ENCODE measurements at regions of chr14 and their contacts with region 1.

Region 1: DNA sequence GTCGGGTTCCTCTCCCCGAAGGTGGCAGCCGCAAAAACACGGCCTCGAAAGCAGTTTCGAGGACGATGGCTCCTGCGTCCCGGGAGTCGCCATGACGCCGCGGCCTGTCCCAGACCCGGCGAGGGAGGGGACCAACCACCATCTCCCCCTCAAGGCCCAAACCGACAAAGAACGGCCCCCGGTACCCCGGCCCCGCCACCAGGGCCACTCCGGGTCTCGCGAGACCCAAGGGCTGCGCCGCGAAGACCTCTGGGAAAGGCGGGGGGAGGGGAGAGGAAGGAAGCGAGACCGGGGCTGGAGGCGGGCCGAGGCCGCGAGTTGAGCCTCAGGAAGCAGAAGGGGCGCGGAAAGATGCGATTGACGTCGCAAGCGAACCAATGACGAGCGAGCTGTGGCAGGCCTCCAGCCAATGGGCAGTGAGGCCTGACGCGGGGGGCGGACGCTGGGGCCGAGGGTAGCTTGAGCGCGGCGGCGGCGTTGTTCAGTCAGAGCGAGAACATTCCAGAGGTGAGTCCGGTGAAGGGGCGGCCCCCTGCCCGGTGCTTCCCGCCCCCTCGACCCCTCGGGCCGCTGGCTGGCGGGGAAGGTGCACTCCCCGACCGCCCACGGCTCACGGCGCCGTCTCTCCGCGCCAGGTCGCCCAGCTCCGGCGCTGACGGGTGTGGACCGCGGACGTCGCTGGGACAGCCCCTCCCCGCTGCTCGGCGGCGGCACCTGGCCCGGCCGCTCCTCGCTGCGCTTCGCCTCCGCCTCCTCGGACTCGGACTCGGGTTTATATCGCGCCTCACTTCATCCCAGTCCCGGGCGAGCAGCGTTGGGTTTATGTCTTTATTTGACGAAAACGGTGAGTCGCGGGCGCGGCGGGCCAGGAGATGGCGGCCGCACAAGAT is at the start of gene EIF5:
- DNase-seq: peak; percentile 99
- ATAC-seq: peak; percentile 98
- H3K4me3 ChIP-seq: peak within 1 kb of the TSS; percentile 61 to 99
- H3K27ac ChIP-seq: peak within 1 kb of the TSS; percentile 97 to 99
- H3K4me1 ChIP-seq: no peaks in the 10 kb centered on the region
- H3K27me3 ChIP-seq: no peaks in the 10 kb centered on the region
- total RNA-seq, gene EIF5: 202 to 218 TPM

Region 2: GRCh38 chr14:103385152-103385993 is 51.4 kb after region 1 on chr14 and contains the start of gene MARK3:
- intact Hi-C with region 1: loop called in 1 of 2 experiments (anchors 5 kb)
- DNase-seq: peak; percentile 99
- ATAC-seq: peak; percentile 99
- H3K4me3 ChIP-seq: peak within 1 kb of the TSS; percentile 92
- H3K27ac ChIP-seq: peak within 1 kb of the TSS; percentile 91 to 94
- H3K4me1 ChIP-seq: peaks cover 0 to 5% of the 10 kb centered on the region in 2 donors
- H3K27me3 ChIP-seq: no peaks in the 10 kb centered on the region
- total RNA-seq, gene MARK3: 77.3 to 121 TPM

Region 3: GRCh38 chr14:103427485-103428443 is 93.8 kb after region 1 on chr14:
- intact Hi-C with region 1: loop called in 1 of 2 experiments (anchors 10 kb)
- DNase-seq: no peak
- ATAC-seq: no peak
- H3K4me3 ChIP-seq: no peak overlapping the region
- H3K27ac ChIP-seq: no peak overlapping the region
- H3K4me1 ChIP-seq: peaks cover 2 to 4% of the 10 kb centered on the region in 2 donors
- H3K27me3 ChIP-seq: no peaks in the 10 kb centered on the region